ENCODE measurements at regions of chr2 and their contacts with region 1.

Region 1: DNA sequence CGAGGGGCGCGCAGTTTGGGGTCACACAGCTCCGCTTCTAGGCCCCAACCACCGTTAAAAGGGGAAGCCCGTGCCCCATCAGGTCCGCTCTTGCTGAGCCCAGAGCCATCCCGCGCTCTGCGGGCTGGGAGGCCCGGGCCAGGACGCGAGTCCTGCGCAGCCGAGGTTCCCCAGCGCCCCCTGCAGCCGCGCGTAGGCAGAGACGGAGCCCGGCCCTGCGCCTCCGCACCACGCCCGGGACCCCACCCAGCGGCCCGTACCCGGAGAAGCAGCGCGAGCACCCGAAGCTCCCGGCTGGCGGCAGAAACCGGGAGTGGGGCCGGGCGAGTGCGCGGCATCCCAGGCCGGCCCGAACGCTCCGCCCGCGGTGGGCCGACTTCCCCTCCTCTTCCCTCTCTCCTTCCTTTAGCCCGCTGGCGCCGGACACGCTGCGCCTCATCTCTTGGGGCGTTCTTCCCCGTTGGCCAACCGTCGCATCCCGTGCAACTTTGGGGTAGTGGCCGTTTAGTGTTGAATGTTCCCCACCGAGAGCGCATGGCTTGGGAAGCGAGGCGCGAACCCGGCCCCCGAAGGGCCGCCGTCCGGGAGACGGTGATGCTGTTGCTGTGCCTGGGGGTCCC is at the start of gene ITGA4:
- DNase-seq: peak; percentile 56
- ATAC-seq: peak; percentile 90
- H3K4me3 ChIP-seq: peak within 1 kb of the TSS; percentile 88
- H3K27ac ChIP-seq: peak within 1 kb of the TSS; percentile 97
- H3K4me1 ChIP-seq: peaks cover 13% of the 10 kb centered on the region
- H3K27me3 ChIP-seq: no peaks in the 10 kb centered on the region
- CTCF ChIP-seq: peak; percentile 81 to 92 (median 81)
- EP300 ChIP-seq: no peak
- POLR2A ChIP-seq: peak; percentile 84
- RAD21 ChIP-seq: peak; percentile 93
- polyA plus RNA-seq, gene ITGA4: 12.4 to 16.2 TPM

Region 2: DNA sequence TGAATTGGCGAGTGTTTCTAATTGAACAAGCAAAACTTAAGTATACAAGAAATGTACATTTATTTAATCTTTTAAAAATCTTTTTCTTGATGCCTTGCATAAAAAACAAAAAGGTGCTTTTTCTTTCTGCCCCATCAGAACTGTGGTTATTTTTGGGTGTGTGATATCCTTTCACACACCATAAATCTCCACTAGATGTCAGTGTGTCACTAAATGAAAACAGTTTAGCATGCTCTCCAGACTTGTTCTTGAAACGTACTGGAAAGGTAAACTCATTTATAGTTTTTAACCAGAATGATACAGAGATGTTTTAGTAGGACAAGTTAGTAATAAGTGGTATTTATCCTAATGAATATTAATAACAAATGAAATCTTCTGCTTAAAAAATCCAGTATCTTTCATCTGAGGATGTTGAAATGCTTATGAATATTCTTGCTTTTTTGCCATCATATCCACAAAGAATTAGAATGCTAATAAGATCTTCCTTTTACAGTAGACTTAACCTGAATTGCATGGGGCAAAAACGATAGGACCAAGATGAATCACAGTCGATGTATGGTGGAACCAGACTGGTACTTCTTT is 380.0 kb before region 1 on chr2:
- CTCF ChIA-PET with region 1: no interaction called
- POLR2A ChIA-PET with region 1: no interaction called
- RAD21 ChIA-PET with region 1: no interaction called
- SMC1A ChIA-PET with region 1: interaction called, 5 read pairs
- in situ Hi-C with region 1: no loop called
- intact Hi-C with region 1: loop called (anchors 1 kb)
- DNase-seq: peak; percentile 16
- ATAC-seq: peak; percentile 94
- H3K4me3 ChIP-seq: no peak overlapping the region
- H3K27ac ChIP-seq: no peak overlapping the region
- H3K4me1 ChIP-seq: no peaks in the 10 kb centered on the region
- H3K27me3 ChIP-seq: no peaks in the 10 kb centered on the region
- CTCF ChIP-seq: peak; percentile 60 to 71 (median 65)
- EP300 ChIP-seq: no peak
- POLR2A ChIP-seq: no peak
- RAD21 ChIP-seq: peak; percentile 93

Region 3: DNA sequence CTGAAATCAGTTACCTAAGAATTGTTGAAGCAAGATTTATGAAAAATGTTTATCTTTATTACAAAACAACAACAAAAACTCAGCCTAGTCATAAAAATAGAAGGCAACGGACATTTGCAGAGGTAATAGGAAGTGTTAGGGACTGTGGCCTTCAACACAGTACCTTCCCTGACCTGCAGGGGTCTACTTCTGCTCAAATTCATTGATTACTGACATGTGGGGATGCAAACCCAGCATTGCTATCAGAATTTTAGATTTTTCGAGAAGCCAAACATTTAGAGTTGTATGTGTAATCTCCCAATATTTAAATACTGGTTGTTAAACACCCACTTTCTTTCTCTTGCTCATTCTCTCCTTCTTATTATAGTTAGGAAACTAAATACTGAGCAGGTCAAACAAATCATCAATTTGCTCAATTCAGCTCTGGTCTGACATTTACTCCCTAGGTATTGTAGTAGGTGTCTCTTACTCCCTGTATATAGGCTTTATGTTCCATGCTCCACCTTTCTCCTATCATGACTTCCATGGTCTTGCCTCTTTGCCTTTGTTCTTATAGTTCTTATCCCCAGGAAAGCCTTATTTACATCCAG is 278.3 kb before region 1 on chr2:
- CTCF ChIA-PET with region 1: no interaction called
- POLR2A ChIA-PET with region 1: no interaction called
- RAD21 ChIA-PET with region 1: interaction called, 6 read pairs
- SMC1A ChIA-PET with region 1: interaction called, 5 read pairs
- in situ Hi-C with region 1: no loop called
- intact Hi-C with region 1: loop called (anchors 5 kb)
- DNase-seq: no peak
- ATAC-seq: peak; percentile 95
- H3K4me3 ChIP-seq: no peak overlapping the region
- H3K27ac ChIP-seq: no peak overlapping the region
- H3K4me1 ChIP-seq: peaks cover 8% of the 10 kb centered on the region; the same call in 1 of the 2 replicates
- H3K27me3 ChIP-seq: no peaks in the 10 kb centered on the region
- CTCF ChIP-seq: peak in 2 of 3 experiments; percentile 57; a peak in 5 of 6 replicates
- EP300 ChIP-seq: no peak
- POLR2A ChIP-seq: no peak
- RAD21 ChIP-seq: peak; percentile 50; the same call in 1 of the 2 replicates

Region 4: DNA sequence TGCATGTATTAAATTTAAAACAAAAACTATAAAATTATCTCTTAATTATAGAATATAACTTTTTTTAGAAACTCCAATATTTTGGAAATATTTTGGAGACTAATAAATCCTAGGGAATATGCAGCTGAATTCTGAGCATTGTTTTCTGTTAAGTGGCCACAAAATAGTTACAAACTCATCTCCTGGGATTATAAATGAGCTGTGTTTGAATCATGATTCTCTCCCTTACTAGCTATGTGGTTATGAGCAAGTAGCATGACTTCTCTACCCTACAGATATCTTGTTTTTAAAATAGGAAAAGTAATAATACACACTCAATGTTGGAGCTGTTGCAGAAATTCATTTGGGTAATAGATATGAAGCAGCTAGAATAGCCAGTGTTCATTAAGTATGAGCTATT is 137.9 kb before region 1 on chr2:
- CTCF ChIA-PET with region 1: interaction called, 235 read pairs
- POLR2A ChIA-PET with region 1: interaction called, 8 read pairs
- RAD21 ChIA-PET with region 1: interaction called, 340 read pairs
- SMC1A ChIA-PET with region 1: interaction called, 313 read pairs
- in situ Hi-C with region 1: no loop called
- intact Hi-C with region 1: no loop called
- DNase-seq: no peak
- ATAC-seq: no peak
- H3K4me3 ChIP-seq: no peak overlapping the region
- H3K27ac ChIP-seq: no peak overlapping the region
- H3K4me1 ChIP-seq: peaks cover 9% of the 10 kb centered on the region; the same call in 1 of the 2 replicates
- H3K27me3 ChIP-seq: no peaks in the 10 kb centered on the region
- CTCF ChIP-seq: no peak
- EP300 ChIP-seq: no peak
- POLR2A ChIP-seq: no peak
- RAD21 ChIP-seq: no peak

Region 5: DNA sequence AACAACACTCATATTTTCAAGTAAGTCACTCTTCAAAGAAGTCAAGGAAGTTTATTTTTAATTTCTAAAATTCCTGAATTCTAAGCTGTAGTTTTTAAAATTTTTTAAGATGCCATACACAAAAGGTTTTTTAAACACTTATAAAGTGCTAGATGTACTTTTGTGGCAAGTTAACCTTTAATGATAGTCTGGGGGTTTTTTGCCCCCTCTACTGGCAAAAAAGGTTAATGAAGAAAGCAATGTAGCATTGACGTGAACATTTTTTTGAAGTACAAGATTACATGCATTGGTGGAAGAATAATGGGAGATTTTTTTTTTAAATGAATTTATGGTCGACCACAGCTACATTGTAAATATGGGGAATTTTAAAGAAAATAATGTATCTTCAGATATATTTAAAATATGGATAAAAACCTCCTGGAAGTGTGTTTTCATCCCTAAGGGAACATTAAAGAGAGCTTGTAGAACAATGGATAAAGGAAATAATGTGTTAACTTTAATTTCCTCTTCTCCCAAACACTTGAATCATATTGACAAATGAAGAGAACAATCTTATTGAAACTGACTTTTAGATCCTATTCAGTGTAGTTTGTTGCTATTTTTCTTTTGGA is 446.9 kb after region 1 on chr2:
- CTCF ChIA-PET with region 1: no interaction called
- POLR2A ChIA-PET with region 1: no interaction called
- RAD21 ChIA-PET with region 1: no interaction called
- SMC1A ChIA-PET with region 1: no interaction called
- in situ Hi-C with region 1: no loop called
- intact Hi-C with region 1: loop called (anchors 10 kb)
- DNase-seq: no peak
- ATAC-seq: peak; percentile 85
- H3K4me3 ChIP-seq: no peak overlapping the region
- H3K27ac ChIP-seq: no peak overlapping the region
- H3K4me1 ChIP-seq: peaks cover 20% of the 10 kb centered on the region; the same call in 1 of the 2 replicates
- H3K27me3 ChIP-seq: no peaks in the 10 kb centered on the region
- CTCF ChIP-seq: peak; percentile 56
- EP300 ChIP-seq: no peak
- POLR2A ChIP-seq: no peak
- RAD21 ChIP-seq: peak; percentile 60